GM13976 (cell line): ENCODE measurements at regions of chr4 and their contacts with region 1.

Region 1: DNA sequence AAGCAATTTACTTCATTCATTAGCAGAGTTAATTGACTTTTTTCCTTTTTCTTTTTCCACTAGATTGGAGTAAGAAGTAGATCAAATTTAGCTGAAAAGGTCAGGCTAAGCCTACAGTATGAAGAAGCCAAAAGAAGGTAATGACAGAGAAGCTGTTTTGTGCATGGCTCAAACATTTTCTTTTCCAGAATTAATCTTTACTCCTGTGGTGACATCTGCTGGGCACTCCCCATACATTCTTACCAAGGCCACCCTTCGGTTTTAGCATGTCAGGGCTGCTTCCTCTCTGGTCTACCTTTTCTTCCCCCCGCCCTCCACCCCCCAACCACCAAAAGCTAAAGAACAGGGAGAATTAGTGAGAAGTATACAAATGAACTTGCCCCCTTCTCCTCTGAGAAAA is 70.2 kb downstream of the CLDN22 start:
- DNase-seq: peak; percentile 22
- CTCF ChIP-seq: no peak

Region 2: GRCh38 chr4:183074296-183074990 is 175.4 kb before region 1 on chr4:
- in situ Hi-C with region 1: loop called (anchors 10 kb)
- DNase-seq: no peak
- CTCF ChIP-seq: no peak

Region 3: DNA sequence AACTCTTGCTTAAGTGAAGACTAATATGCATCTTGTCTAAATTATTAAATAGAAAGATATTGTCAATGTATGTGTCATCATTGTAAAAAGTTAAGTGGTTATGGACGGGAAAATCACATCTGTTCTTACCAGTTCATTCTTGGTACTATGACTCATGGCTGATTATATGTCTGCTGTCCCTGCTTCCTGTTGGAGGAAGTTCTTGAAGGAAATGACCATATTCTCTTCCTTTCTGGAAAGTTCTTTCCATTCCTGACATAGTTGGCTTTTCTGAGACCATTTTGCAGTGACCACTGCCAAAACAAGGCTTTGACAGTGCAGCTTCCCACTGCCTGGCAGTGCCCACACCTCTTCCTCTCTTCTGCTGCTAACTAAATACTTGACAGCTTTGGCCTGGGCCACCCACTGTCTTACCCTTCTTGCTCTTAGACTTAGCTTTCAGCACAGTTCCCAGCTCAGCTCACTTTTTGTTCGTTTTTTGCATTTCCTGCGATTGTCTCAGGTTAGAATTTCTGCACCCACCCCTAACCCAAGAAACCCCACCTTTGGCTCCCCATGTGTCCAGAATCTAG is 85.6 kb after region 1 on chr4:
- in situ Hi-C with region 1: no loop called
- DNase-seq: no peak
- CTCF ChIP-seq: no peak